Sigmoid colon (tissue), 7 donors: ENCODE measurements at regions of chr3 and their contacts with region 1.

Region 1: GRCh38 chr3:120450600-120451271 is at the start of gene FSTL1:
- DNase-seq: peak; percentile 91
- H3K4me3 ChIP-seq: peak within 1 kb of the TSS; percentile 85 to 94 (median 89)
- H3K27ac ChIP-seq: peak within 1 kb of the TSS; percentile 96 to 98 (median 98)
- H3K4me1 ChIP-seq: peaks cover 0 to 51% (median 46%) of the 10 kb centered on the region in 4 donors
- H3K27me3 ChIP-seq: no peaks in the 10 kb centered on the region
- CTCF ChIP-seq: no peak
- EP300 ChIP-seq: no peak
- POLR2A ChIP-seq: peak; percentile 31 to 84
- total RNA-seq, gene FSTL1: 266 to 653 (median 320) TPM

Region 2: DNA sequence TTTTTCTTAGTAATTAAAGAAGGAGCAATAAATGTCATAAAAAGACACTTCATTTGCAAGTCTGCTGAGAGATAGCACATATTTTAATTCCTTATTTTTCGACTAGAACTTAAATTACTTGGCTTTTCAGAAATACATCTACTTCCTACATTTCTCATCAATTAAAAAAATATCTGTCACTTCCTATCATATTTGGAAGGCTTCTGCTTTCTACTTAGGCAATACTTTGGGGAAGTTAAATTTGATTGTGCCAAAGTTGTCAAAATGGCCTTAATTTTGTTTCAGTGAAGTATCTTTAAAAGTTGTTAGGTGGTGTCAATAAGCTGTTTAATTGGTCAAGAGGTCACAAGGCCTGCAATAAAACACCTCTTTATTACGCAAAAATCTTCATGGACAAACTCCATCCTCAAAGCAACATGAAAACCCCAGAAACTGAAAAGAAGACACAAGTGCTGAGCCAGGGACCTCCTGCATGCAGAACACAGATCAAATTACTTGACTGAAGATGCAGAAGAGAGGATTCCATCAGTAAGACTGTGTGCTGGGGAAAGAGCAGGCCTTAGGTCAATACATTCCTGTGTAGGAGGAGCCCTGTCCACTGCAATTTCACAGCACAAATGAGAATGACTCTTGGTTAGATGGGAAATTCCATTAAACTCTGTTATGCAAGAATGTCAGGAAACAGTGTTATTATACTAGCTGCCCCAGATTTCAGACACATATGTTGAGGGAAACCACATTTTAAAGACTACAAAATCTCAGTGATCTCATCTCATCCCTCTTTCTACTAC is 48.0 kb after region 1 on chr3:
- intact Hi-C with region 1: loop called (anchors 5 kb)
- DNase-seq: peak; percentile 82
- H3K4me3 ChIP-seq: no peak overlapping the region
- H3K27ac ChIP-seq: peak overlapping the region in 3 of 4 donors; percentile 70 to 79 (median 71)
- H3K4me1 ChIP-seq: peaks cover 0 to 33% (median 22%) of the 10 kb centered on the region in 4 donors
- H3K27me3 ChIP-seq: no peaks in the 10 kb centered on the region
- CTCF ChIP-seq: no peak
- EP300 ChIP-seq: no peak
- POLR2A ChIP-seq: no peak